ENCODE measurements at regions of chr18 and their contacts with region 1.

Region 1: DNA sequence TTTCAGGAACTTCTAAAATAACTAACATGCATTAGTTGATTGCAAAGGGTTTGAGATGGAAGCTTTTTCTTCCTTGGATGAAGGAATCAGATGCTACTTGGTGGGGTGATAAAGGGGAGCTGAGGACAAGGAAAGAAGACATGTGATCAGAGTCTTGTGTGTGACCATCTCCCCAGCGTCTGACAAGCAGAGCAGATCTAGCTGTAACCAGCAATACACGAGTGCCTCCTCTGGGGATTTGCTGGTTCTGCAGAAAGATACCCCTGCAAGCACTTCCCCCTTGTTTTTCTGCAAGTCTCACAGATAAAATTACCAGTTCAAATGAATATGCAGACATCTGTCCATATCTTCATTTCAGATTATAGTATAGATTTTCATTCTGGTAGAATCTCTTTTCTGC is 2.7 kb downstream of the CDH7 start:
- DNase-seq: peak; percentile 76
- ATAC-seq: peak; percentile 60
- H3K4me3 ChIP-seq: peak overlapping the region; percentile 89; the same call in 1 of the 2 replicates
- H3K27ac ChIP-seq: no peak overlapping the region
- H3K4me1 ChIP-seq: peaks cover 44% of the 10 kb centered on the region
- H3K27me3 ChIP-seq: no peaks in the 10 kb centered on the region
- CTCF ChIP-seq: peak; percentile 83

Region 2: DNA sequence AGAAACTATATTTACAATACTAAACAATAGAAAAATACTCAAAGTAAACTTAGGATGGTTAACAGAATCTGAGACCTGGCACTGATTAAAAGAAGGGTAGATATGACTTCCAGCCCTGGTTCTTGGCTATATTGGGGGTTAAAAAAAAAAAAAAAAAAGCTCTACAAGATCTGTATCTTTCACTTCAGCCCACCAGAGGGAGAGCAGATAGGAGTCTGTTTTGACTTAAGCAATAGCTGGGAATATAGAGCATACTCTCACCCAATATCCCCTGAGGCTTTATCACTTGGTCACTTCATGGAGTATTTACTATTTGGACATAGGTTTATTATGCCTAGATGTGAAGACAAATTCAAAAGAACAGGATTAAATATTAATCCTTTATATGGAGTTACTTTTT is 1005.7 kb before region 1 on chr18:
- CTCF ChIA-PET with region 1: no interaction called
- POLR2A ChIA-PET with region 1: no interaction called
- intact Hi-C with region 1: no loop called
- DNase-seq: no peak
- ATAC-seq: no peak
- H3K4me3 ChIP-seq: no peak overlapping the region
- H3K27ac ChIP-seq: no peak overlapping the region
- H3K4me1 ChIP-seq: no peaks in the 10 kb centered on the region
- H3K27me3 ChIP-seq: no peaks in the 10 kb centered on the region
- CTCF ChIP-seq: no peak; the same call in 1 of the 2 replicates

Region 3: DNA sequence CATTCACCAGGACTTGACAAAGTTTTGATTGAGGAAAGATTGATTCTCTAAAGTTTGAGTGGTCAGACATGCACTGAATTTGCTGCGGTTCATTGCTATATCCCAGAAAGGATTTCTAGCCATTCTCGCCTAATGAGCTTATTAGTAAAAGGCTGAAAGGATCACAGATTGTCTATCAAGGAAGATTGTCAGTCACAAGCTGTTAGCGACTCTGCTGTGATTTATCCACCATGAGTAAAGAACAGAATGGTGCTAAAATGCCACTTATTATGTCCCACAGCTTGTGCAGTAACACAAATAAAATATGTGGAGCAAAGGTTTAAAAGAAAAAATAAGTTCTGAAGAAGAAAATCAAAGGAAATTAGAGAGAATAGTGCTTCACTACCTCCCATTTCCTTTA is 703.9 kb before region 1 on chr18:
- CTCF ChIA-PET with region 1: interaction called, 20 read pairs
- POLR2A ChIA-PET with region 1: no interaction called
- intact Hi-C with region 1: no loop called
- DNase-seq: no peak
- ATAC-seq: no peak
- H3K4me3 ChIP-seq: no peak overlapping the region
- H3K27ac ChIP-seq: no peak overlapping the region
- H3K4me1 ChIP-seq: no peaks in the 10 kb centered on the region
- H3K27me3 ChIP-seq: no peaks in the 10 kb centered on the region
- CTCF ChIP-seq: no peak

Region 4: GRCh38 chr18:65215865-65216466 is 537.6 kb before region 1 on chr18:
- CTCF ChIA-PET with region 1: no interaction called
- POLR2A ChIA-PET with region 1: no interaction called
- intact Hi-C with region 1: loop called (anchors 5 kb)
- DNase-seq: peak; percentile 59
- ATAC-seq: peak; percentile 70
- H3K4me3 ChIP-seq: peak overlapping the region; percentile 34; the same call in 1 of the 2 replicates
- H3K27ac ChIP-seq: no peak overlapping the region
- H3K4me1 ChIP-seq: peaks cover 12% of the 10 kb centered on the region; the same call in 1 of the 2 replicates
- H3K27me3 ChIP-seq: no peaks in the 10 kb centered on the region
- CTCF ChIP-seq: no peak

Region 5: GRCh38 chr18:65439188-65439587 is 314.3 kb before region 1 on chr18:
- CTCF ChIA-PET with region 1: no interaction called
- POLR2A ChIA-PET with region 1: no interaction called
- intact Hi-C with region 1: loop called (anchors 5 kb)
- DNase-seq: peak; percentile 43
- ATAC-seq: peak; percentile 57
- H3K4me3 ChIP-seq: no peak overlapping the region
- H3K27ac ChIP-seq: no peak overlapping the region
- H3K4me1 ChIP-seq: no peaks in the 10 kb centered on the region
- H3K27me3 ChIP-seq: 0 out of 2 replicates have a peak, but pooled peaks cover 3% of the 10 kb centered on the region
- CTCF ChIP-seq: peak; percentile 61

Region 6: GRCh38 chr18:65725251-65726050 is 28.1 kb before region 1 on chr18:
- CTCF ChIA-PET with region 1: interaction called, 9 read pairs
- POLR2A ChIA-PET with region 1: no interaction called
- intact Hi-C with region 1: loop called (anchors 1 kb)
- DNase-seq: peak; percentile 73
- ATAC-seq: peak; percentile 87
- H3K4me3 ChIP-seq: peak overlapping the region; percentile 16; the same call in 1 of the 2 replicates
- H3K27ac ChIP-seq: no peak overlapping the region
- H3K4me1 ChIP-seq: no peaks in the 10 kb centered on the region
- H3K27me3 ChIP-seq: no peaks in the 10 kb centered on the region
- CTCF ChIP-seq: peak; percentile 80